Activated CD4-positive, alpha-beta T cell treated with anti-CD3 and anti-CD28 coated beads, Interleukin-2, amount 10 ng/mL, durations not matched to agents 7 days and 5 days (primary cell): ENCODE measurements at regions of chr19 and their contacts with region 1.

Region 1: GRCh38 chr19:49097455-49098288 is 12.4 kb downstream of the SNRNP70 start:
- DNase-seq: peak; percentile 78
- H3K4me3 Mint-ChIP-seq: no peak overlapping the region
- H3K27ac Mint-ChIP-seq: peak overlapping the region; percentile 77
- H3K4me1 Mint-ChIP-seq: peaks cover 18% of the 10 kb centered on the region
- H3K27me3 Mint-ChIP-seq: no peaks in the 10 kb centered on the region

Region 2: DNA sequence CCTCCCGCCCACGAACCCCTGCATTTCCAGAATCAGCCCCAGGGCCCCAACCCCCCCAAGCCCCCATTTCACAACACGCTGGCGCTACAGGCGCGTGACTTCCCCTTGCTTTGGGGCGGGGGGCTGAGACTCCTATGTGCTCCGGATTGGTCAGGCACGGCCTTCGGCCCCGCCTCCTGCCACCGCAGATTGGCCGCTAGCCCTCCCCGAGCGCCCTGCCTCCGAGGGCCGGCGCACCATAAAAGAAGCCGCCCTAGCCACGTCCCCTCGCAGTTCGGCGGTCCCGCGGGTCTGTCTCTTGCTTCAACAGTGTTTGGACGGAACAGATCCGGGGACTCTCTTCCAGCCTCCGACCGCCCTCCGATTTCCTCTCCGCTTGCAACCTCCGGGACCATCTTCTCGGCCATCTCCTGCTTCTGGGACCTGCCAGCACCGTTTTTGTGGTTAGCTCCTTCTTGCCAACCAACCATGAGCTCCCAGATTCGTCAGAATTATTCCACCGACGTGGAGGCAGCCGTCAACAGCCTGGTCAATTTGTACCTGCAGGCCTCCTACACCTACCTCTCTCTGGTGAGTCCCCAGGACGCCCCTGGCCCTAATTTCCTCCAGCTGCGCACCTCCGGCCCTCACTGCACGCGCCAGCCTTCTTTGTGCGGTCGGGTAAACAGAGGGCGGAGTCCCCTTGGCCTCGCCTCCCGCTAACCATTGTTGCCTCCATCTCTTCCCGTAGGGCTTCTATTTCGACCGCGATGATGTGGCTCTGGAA is 132.4 kb before region 1 on chr19 and contains the start of gene FTL:
- CTCF ChIA-PET with region 1: no interaction called
- POLR2A ChIA-PET with region 1: no interaction called
- DNase-seq: peak; percentile 92
- H3K4me3 Mint-ChIP-seq: peak within 1 kb of the TSS; percentile 90
- H3K27ac Mint-ChIP-seq: peak within 1 kb of the TSS; percentile 97
- H3K4me1 Mint-ChIP-seq: peaks cover 70% of the 10 kb centered on the region
- H3K27me3 Mint-ChIP-seq: no peaks in the 10 kb centered on the region
- total RNA-seq, gene FTL: 683 to 880 TPM

Region 3: DNA sequence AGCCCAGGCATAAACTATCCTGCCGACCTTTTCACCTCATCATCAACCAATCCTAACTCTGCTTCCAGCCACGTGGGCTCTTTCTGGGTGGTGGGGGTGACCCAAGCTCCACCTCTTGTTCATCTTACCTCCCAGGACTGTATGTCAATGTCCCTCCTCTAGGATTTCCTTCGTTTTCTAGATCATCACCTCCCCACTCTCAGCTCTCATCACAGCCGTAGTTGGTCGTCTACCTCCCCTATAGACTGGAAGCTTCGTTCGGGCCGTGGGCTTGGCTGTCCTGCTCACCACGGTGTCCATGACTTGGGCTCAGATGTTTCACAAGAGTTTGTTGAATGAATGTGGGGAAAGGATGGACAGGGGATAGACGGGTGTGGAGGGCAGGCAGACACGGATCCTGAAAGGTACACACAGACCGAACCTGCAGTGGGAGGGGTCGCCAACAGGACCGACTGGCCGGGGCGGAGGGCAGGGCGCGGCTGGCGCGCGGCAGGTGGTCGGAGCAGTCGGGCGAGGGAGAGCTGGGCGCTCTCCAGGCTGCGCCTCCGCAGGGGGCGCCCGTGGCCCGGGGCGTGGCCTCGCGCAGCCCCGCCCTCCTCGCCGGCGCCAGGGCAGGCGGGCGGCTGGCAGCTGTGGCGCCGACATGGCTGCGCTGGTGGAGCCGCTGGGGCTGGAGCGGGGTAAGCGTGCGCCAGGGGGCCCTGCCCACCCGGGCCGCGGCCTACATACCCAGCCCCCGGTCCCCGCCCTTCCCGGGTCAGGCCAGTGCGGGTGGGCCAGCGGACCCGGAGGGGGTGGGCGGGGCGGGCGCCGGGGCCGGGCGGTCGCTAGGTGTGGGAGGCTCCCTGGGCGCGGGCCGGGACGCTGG is 16.3 kb after region 1 on chr19 and contains the start of gene LIN7B:
- CTCF ChIA-PET with region 1: interaction called, 22 read pairs
- POLR2A ChIA-PET with region 1: no interaction called
- DNase-seq: peak; percentile 65
- H3K4me3 Mint-ChIP-seq: peak within 1 kb of the TSS; percentile 72
- H3K27ac Mint-ChIP-seq: peak within 1 kb of the TSS; percentile 13
- H3K4me1 Mint-ChIP-seq: peaks cover 31% of the 10 kb centered on the region
- H3K27me3 Mint-ChIP-seq: no peaks in the 10 kb centered on the region
- total RNA-seq, gene LIN7B: 5.6 TPM

Region 4: GRCh38 chr19:49127674-49128544 is 30.2 kb after region 1 on chr19:
- CTCF ChIA-PET with region 1: interaction called, 11 read pairs
- POLR2A ChIA-PET with region 1: no interaction called
- DNase-seq: peak; percentile 95
- H3K4me3 Mint-ChIP-seq: peak overlapping the region; percentile 81
- H3K27ac Mint-ChIP-seq: peak overlapping the region; percentile 91
- H3K4me1 Mint-ChIP-seq: peaks cover 17% of the 10 kb centered on the region
- H3K27me3 Mint-ChIP-seq: peaks cover 4% of the 10 kb centered on the region

Region 5: DNA sequence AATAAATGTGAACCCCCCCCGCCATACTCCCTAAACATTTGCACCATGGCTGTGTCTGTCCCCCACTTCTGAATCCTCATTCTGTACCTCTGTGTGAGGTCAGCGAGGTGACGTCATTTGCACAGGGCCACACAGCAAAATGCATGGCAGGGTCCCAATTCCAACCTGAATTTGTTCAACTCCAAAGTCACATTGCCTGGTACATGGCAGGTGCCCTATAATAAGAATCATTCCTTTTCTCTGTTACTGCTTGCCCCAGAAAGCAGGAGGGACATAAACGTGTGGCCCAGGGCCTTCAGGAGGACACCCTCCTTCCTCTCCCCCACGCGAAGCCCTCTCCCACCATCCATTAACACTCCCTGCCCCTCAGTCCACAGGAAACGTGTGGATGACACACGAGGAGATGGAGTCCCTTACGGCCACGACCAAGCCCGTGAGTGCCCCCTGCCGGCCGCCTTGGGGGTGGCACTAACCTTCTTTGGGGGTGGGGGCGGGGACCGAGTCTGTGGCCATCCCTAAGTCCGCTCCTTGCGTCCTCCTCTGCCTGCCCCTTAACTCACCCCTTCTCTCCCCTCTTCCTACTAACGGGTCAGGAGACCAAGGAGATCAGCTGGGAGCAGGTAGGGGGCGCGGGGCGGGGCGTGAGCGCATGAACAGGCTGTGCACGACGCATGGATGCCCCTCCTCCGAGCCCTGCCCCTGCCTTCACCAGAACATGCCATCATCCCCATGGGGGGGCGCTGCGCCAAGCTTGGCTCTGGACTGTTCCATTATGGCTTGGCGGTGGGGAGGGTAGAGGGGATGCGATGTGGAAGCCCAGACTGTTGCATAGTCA is 48.1 kb after region 1 on chr19:
- CTCF ChIA-PET with region 1: interaction called, 12 read pairs
- POLR2A ChIA-PET with region 1: no interaction called
- DNase-seq: peak; percentile 75
- H3K4me3 Mint-ChIP-seq: no peak overlapping the region
- H3K27ac Mint-ChIP-seq: no peak overlapping the region
- H3K4me1 Mint-ChIP-seq: peaks cover 42% of the 10 kb centered on the region
- H3K27me3 Mint-ChIP-seq: peaks cover 47% of the 10 kb centered on the region

Region 6: GRCh38 chr19:49200238-49200862 is 102.7 kb after region 1 on chr19:
- CTCF ChIA-PET with region 1: interaction called, 18 read pairs
- POLR2A ChIA-PET with region 1: no interaction called
- DNase-seq: no peak
- H3K4me3 Mint-ChIP-seq: no peak overlapping the region
- H3K27ac Mint-ChIP-seq: no peak overlapping the region
- H3K4me1 Mint-ChIP-seq: peaks cover 11% of the 10 kb centered on the region
- H3K27me3 Mint-ChIP-seq: no peaks in the 10 kb centered on the region